ENCODE measurements at regions of chr20 and their contacts with region 1.

Region 1: DNA sequence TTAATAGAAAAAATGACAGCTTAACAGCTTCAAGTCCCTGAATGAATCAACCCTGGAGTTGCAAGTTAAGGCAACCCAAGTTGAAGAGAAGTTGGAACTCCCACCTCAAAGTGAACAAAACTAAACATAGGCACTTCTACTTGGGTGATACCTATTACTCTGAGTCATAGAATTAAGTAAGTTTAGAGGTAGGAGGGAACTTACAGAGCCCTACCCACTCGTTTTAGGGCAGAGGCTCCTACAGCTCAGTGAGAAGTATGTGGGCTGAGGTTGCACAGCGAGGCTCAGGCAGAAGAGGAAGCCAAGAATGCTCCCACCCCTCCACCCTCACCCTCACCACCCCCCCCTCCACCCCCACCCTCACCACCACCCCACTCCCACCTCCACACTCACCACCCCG is 42.2 kb downstream of the NFATC2 start:
- DNase-seq: no peak
- ATAC-seq: peak; percentile 85
- H3K4me3 Mint-ChIP-seq: no peak overlapping the region
- H3K27ac Mint-ChIP-seq: peak overlapping the region; percentile 69
- H3K4me1 Mint-ChIP-seq: peaks cover 93% of the 10 kb centered on the region
- H3K27me3 Mint-ChIP-seq: no peaks in the 10 kb centered on the region
- CTCF ChIP-seq: no peak

Region 2: GRCh38 chr20:50516180-50516934 is 984.0 kb before region 1 on chr20:
- CTCF ChIA-PET with region 1: no interaction called
- POLR2A ChIA-PET with region 1: no interaction called
- intact Hi-C with region 1: no loop called
- DNase-seq: no peak
- ATAC-seq: peak; percentile 78
- H3K4me3 Mint-ChIP-seq: peak overlapping the region; percentile 90
- H3K27ac Mint-ChIP-seq: peak overlapping the region; percentile 96
- H3K4me1 Mint-ChIP-seq: peaks cover 95% of the 10 kb centered on the region
- H3K27me3 Mint-ChIP-seq: no peaks in the 10 kb centered on the region
- CTCF ChIP-seq: no peak

Region 3: DNA sequence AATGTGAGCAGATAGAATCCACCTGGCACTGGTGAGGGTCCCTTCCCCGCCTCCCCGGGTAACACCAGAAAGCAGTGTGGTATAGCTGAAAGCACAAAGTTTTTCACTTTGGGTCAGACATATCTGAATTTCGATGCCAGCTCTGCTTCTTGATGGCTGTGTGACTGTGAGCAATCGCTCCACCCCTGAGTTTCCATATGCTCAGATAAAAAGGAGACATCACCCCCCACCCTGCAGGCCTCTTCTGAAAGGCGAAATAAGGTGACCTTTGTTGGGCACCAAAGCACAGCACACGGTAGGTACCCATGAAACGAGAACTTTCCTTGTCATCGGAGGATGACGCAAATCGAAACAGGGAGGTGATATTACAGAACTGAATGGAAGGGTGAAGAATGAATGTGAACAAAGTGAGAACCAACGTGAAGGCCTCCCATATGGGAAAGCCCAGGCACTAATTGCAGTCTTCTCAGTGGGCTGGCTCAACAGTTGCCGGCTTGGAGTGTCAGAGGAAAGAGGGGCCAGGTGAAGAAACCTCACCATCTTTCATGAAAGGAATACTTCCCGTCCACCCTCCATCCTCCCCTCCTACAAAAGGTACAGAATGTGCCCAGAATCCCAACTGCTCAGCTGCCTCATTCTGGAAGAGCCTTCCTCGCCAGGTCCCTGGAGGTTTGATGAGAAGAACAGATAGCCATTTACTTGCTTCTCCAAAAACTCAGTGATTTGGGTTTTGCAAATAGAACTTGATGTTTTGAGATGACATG is 19.6 kb before region 1 on chr20:
- CTCF ChIA-PET with region 1: no interaction called
- POLR2A ChIA-PET with region 1: interaction called, 15 read pairs
- intact Hi-C with region 1: loop called (anchors 1 kb)
- DNase-seq: no peak
- ATAC-seq: peak; percentile 84
- H3K4me3 Mint-ChIP-seq: peak overlapping the region; percentile 48
- H3K27ac Mint-ChIP-seq: peak overlapping the region; percentile 80
- H3K4me1 Mint-ChIP-seq: peaks cover 38% of the 10 kb centered on the region
- H3K27me3 Mint-ChIP-seq: no peaks in the 10 kb centered on the region
- CTCF ChIP-seq: no peak

Region 4: GRCh38 chr20:51525241-51526129 is 25.2 kb after region 1 on chr20:
- CTCF ChIA-PET with region 1: no interaction called
- POLR2A ChIA-PET with region 1: interaction called, 4 read pairs
- intact Hi-C with region 1: loop called (anchors 2 kb)
- DNase-seq: peak; percentile 31
- ATAC-seq: peak; percentile 53
- H3K4me3 Mint-ChIP-seq: peak overlapping the region; percentile 58
- H3K27ac Mint-ChIP-seq: peak overlapping the region; percentile 82
- H3K4me1 Mint-ChIP-seq: peaks cover 77% of the 10 kb centered on the region
- H3K27me3 Mint-ChIP-seq: no peaks in the 10 kb centered on the region
- CTCF ChIP-seq: no peak

Region 5: GRCh38 chr20:51884561-51884960 is 384.2 kb after region 1 on chr20:
- CTCF ChIA-PET with region 1: no interaction called
- POLR2A ChIA-PET with region 1: no interaction called
- intact Hi-C with region 1: no loop called
- DNase-seq: no peak
- ATAC-seq: no peak
- H3K4me3 Mint-ChIP-seq: no peak overlapping the region
- H3K27ac Mint-ChIP-seq: no peak overlapping the region
- H3K4me1 Mint-ChIP-seq: no peaks in the 10 kb centered on the region
- H3K27me3 Mint-ChIP-seq: peaks cover 2% of the 10 kb centered on the region
- CTCF ChIP-seq: no peak